ENCODE measurements at regions of chr9 and their contacts with region 1.

Region 1: GRCh38 chr9:125407974-125408900 is 146.6 kb downstream of the GAPVD1 start:
- DNase-seq: peak; percentile 61
- H3K4me3 ChIP-seq: peak overlapping the region; percentile 49 to 54
- H3K27ac ChIP-seq: peak overlapping the region; percentile 38 to 67
- H3K4me1 ChIP-seq: peaks cover 2% of the 10 kb centered on the region
- H3K27me3 ChIP-seq: no peaks in the 10 kb centered on the region
- CTCF ChIP-seq: peak; percentile 79 to 89 (median 84)
- POLR2A ChIP-seq: no peak

Region 2: DNA sequence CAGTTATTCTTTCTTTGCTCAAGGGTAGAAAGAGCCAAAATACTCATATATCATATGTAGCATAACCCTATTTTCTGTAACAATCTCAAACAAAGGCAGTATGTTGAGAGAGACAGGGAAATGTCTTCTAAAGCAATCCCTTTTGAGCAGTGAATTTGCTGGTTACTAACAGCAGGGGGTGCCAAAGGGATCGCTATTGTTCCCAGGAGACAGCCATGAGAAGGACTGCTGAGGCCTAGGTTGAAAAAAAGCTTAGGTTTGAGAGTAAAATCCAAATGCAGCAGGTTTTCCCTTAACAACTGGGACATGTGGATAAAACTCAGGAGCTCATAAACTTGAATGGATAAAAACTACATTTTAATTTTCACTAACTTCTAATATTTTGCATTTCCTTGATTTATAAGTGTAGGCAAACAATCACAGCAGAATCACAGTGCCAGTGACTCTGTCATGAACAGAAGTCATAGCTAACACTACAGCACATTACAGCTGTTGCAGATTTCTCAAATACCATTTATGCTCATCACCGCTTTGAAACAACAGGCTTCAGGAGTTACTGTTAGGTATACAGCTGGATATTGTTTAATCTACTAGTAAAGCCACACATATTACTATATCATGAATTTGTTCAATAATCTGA is 150.3 kb after region 1 on chr9:
- intact Hi-C with region 1: loop called (anchors 5 kb)
- DNase-seq: peak; percentile 59
- H3K4me3 ChIP-seq: no peak overlapping the region
- H3K27ac ChIP-seq: no peak overlapping the region
- H3K4me1 ChIP-seq: no peaks in the 10 kb centered on the region
- H3K27me3 ChIP-seq: no peaks in the 10 kb centered on the region
- CTCF ChIP-seq: peak; percentile 41 to 74 (median 64)
- POLR2A ChIP-seq: no peak

Region 3: GRCh38 chr9:125631391-125632085 is 223.3 kb after region 1 on chr9:
- intact Hi-C with region 1: loop called (anchors 2 kb)
- DNase-seq: peak; percentile 12
- H3K4me3 ChIP-seq: no peak overlapping the region
- H3K27ac ChIP-seq: no peak overlapping the region
- H3K4me1 ChIP-seq: peaks cover 8% of the 10 kb centered on the region
- H3K27me3 ChIP-seq: no peaks in the 10 kb centered on the region
- CTCF ChIP-seq: peak in 3 of 4 experiments; percentile 49 to 64 (median 53)
- POLR2A ChIP-seq: no peak

Region 4: DNA sequence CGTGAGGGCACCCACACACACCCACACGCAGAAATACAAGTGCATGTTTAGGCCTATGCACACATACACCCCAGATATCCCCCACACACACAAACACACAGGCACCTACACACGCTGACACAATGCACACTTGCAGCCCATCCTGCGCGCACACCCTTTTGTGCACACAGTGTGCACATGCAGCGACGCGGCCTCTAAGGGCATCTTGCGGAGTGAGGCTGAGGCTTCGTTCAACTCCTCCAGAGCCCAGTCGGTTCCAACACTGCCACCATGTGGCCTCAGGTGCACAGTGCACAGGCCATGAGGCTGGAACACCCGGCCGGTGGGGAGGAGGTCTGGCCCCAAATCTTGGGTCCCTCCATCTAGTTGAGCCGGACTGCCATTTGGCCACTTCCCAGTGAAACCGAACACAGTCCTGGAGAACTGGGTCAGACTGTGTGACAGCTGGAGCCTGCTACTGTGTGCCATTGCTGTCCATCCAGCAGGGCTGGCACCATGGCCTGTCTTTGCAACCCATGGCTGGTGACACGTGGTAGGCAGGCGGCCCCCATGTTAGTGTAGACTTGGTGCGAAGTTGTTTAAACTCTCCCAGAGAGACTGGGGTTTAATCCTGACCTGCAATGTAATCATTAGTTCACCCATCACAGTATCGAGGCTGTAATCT is 820.7 kb after region 1 on chr9:
- intact Hi-C with region 1: loop called (anchors 2 kb)
- DNase-seq: peak; percentile 63
- H3K4me3 ChIP-seq: no peak overlapping the region
- H3K27ac ChIP-seq: no peak overlapping the region
- H3K4me1 ChIP-seq: no peaks in the 10 kb centered on the region
- H3K27me3 ChIP-seq: no peaks in the 10 kb centered on the region
- CTCF ChIP-seq: peak; percentile 68 to 93 (median 85)
- POLR2A ChIP-seq: no peak

Measured in prostate gland (tissue), 2 donors.